ENCODE measurements at regions of chr1 and their contacts with region 1.

Region 1: GRCh38 chr1:171530676-171531075 is 45.3 kb downstream of the PRRC2C start:
- DNase-seq: no peak
- H3K4me3 Mint-ChIP-seq: no peak overlapping the region
- H3K27ac Mint-ChIP-seq: no peak overlapping the region
- H3K4me1 Mint-ChIP-seq: no peaks in the 10 kb centered on the region
- H3K27me3 Mint-ChIP-seq: no peaks in the 10 kb centered on the region
- CTCF ChIP-seq: no peak

Region 2: DNA sequence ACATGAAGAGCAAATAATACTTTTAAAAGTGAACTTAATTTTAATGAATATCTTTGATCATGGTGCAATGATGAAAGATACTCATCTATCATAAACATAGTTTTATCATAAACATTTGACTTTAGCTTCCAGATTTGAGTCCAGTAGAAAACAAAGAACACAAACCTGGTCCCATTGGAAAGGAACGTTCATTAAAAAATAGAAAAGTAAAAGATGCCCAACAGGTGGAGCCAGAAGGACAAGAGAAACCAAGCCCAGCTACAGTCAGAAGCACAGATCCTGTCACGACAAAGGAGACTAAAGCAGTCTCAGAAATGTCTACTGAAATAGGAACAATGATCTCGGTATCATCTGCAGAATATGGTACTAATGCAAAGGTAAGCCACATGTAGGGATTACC is 35.8 kb after region 1 on chr1:
- CTCF ChIA-PET with region 1: interaction called, 3 read pairs
- POLR2A ChIA-PET with region 1: interaction called, 6 read pairs
- intact Hi-C with region 1: loop called (anchors 5 kb)
- DNase-seq: peak; percentile 22
- H3K4me3 Mint-ChIP-seq: no peak overlapping the region
- H3K27ac Mint-ChIP-seq: no peak overlapping the region
- H3K4me1 Mint-ChIP-seq: no peaks in the 10 kb centered on the region
- H3K27me3 Mint-ChIP-seq: no peaks in the 10 kb centered on the region
- CTCF ChIP-seq: peak; percentile 10

Measured in MCF 10A (cell line).